ENCODE measurements at regions of chr19 and their contacts with region 1.

Region 1: GRCh38 chr19:17405250-17406038 is at the start of gene BST2:
- DNase-seq: no peak
- ATAC-seq: peak; percentile 38
- H3K4me3 ChIP-seq: no peak within 1 kb of the TSS
- H3K27ac ChIP-seq: peak within 1 kb of the TSS; percentile 5; the same call in 1 of the 2 replicates
- H3K4me1 ChIP-seq: peaks cover 4 to 32% of the 10 kb centered on the region in 2 experiments; a peak in 3 of 4 replicates
- H3K27me3 ChIP-seq: no peaks in the 10 kb centered on the region
- CTCF ChIP-seq: no peak
- POLR2A ChIP-seq: no peak
- RAD21 ChIP-seq: no peak
- total RNA-seq, gene BST2: 5.4 TPM

Region 2: GRCh38 chr19:17419621-17420466 is 14.4 kb after region 1 on chr19 and contains the start of gene MVB12A:
- CTCF ChIA-PET with region 1: no interaction called
- POLR2A ChIA-PET with region 1: interaction called, 21 read pairs
- RAD21 ChIA-PET with region 1: no interaction called
- intact Hi-C with region 1: no loop called
- DNase-seq: peak; percentile 98
- ATAC-seq: peak; percentile 90
- H3K4me3 ChIP-seq: peak within 1 kb of the TSS; percentile 91 to 93
- H3K27ac ChIP-seq: peak within 1 kb of the TSS; percentile 94
- H3K4me1 ChIP-seq: peaks cover 11 to 34% of the 10 kb centered on the region in 2 experiments
- H3K27me3 ChIP-seq: no peaks in the 10 kb centered on the region
- CTCF ChIP-seq: no peak
- POLR2A ChIP-seq: peak; percentile 75
- RAD21 ChIP-seq: no peak
- total RNA-seq, gene MVB12A: 91.7 TPM

Measured in HCT116 (cell line).